Posterior vena cava (tissue), 2 donors: ENCODE measurements at regions of chr3 and their contacts with region 1.

Region 1: GRCh38 chr3:51735039-51735438 is 28.2 kb downstream of the GRM2 start:
- DNase-seq: no peak

Region 2: GRCh38 chr3:50786631-50787030 is 948.4 kb before region 1 on chr3:
- intact Hi-C with region 1: loop called in 1 of 2 experiments (anchors 5 kb)
- DNase-seq: no peak

Region 3: GRCh38 chr3:51860703-51861665 is 125.9 kb after region 1 on chr3 and contains the start of gene IQCF2:
- intact Hi-C with region 1: no loop called
- DNase-seq: no peak
- total RNA-seq, gene IQCF2: not detected